Gastrocnemius medialis (tissue), 4 donors: ENCODE measurements at regions of chr6 and their contacts with region 1.

Region 1: GRCh38 chr6:63677282-63677681 is 41.7 kb downstream of the PHF3 start:
- DNase-seq: no peak
- ATAC-seq: peak in 1 of 2 donors; percentile 13
- H3K4me3 ChIP-seq: no peak overlapping the region
- H3K27ac ChIP-seq: peak overlapping the region in 2 of 4 donors; percentile 16 to 18
- H3K4me1 ChIP-seq: peaks cover 36 to 52% of the 10 kb centered on the region in 2 donors
- H3K27me3 ChIP-seq: no peaks in the 10 kb centered on the region
- CTCF ChIP-seq: no peak
- POLR2A ChIP-seq: no peak

Region 2: DNA sequence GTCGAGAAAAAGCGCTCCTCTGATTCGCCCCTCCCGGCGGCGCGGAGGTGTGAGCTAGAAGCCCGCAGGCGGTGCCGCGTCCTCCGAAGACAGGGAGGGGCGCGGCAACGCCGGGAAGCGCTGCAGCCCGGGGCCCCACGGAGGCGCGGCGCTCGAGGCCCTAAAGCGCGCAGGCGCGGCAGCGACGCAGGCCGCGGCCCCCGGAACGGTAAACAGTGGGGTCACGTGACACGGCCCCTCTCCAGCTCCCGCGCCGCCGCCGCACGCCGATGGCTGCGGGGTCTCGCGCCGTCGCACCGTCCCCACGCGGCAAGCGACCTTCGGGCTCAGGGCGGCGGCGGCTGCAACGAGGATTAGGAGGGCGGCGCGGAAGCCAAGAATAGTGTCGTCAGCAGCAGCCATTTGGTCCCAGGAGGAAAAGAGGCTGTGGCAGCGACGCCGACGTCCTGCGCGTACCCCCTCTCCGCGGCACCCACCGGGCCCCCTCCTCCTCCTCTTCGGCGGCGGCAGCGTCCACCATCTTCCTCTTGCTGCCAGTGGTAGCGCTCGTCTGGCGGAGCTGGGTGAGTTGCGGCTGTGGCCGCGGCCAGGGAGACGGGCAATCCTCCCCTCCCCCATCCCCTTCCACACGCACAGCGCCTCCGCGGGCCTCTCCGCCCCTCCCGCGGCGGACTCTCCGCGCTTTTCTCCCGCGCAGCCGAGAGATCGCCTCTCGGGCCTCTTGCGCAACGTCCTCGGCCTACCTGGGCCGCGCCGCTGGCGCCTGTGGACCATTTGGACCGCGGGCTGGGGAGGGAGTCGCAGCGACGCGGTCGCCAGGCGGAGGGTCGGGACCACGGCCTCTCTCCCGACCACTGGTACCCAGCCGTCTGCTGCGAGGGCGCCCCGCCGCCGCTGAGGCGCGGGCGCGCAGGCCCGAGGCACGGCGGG is 41.4 kb before region 1 on chr6 and contains the start of gene PHF3:
- in situ Hi-C with region 1: no loop called
- intact Hi-C with region 1: loop called (anchors 5 kb)
- DNase-seq: peak; percentile 80 to 86
- ATAC-seq: peak; percentile 84 to 85
- H3K4me3 ChIP-seq: peak within 1 kb of the TSS; percentile 76 to 93 (median 83)
- H3K27ac ChIP-seq: peak within 1 kb of the TSS; percentile 92 to 98 (median 96)
- H3K4me1 ChIP-seq: peaks cover 39 to 43% of the 10 kb centered on the region in 2 donors
- H3K27me3 ChIP-seq: no peaks in the 10 kb centered on the region
- CTCF ChIP-seq: peak in 3 of 5 experiments; percentile 24 to 50 (median 29)
- POLR2A ChIP-seq: peak; percentile 44 to 73
- total RNA-seq, gene PHF3: 49.4 to 73.1 (median 61.9) TPM

Region 3: GRCh38 chr6:63724721-63725120 is 47.4 kb after region 1 on chr6:
- in situ Hi-C with region 1: no loop called
- intact Hi-C with region 1: no loop called
- DNase-seq: no peak
- ATAC-seq: no peak
- H3K4me3 ChIP-seq: no peak overlapping the region
- H3K27ac ChIP-seq: no peak overlapping the region
- H3K4me1 ChIP-seq: no peaks in the 10 kb centered on the region
- H3K27me3 ChIP-seq: no peaks in the 10 kb centered on the region
- CTCF ChIP-seq: no peak
- POLR2A ChIP-seq: no peak